ENCODE measurements at regions of chr6 and their contacts with region 1.

Region 1: GRCh38 chr6:56955171-56956045 is 501 bp downstream of the BEND6 start:
- DNase-seq: peak; percentile 62
- H3K4me3 Mint-ChIP-seq: peak overlapping the region; percentile 84
- H3K27ac Mint-ChIP-seq: peak overlapping the region; percentile 70
- H3K4me1 Mint-ChIP-seq: peaks cover 19% of the 10 kb centered on the region
- H3K27me3 Mint-ChIP-seq: peaks cover 57% of the 10 kb centered on the region

Region 2: GRCh38 chr6:56843573-56844349 is 111.6 kb before region 1 on chr6:
- intact Hi-C with region 1: loop called (anchors 5 kb)
- DNase-seq: peak; percentile 57
- H3K4me3 Mint-ChIP-seq: peak overlapping the region; percentile 78
- H3K27ac Mint-ChIP-seq: peak overlapping the region; percentile 32
- H3K4me1 Mint-ChIP-seq: peaks cover 9% of the 10 kb centered on the region
- H3K27me3 Mint-ChIP-seq: peaks cover 52% of the 10 kb centered on the region

Region 3: DNA sequence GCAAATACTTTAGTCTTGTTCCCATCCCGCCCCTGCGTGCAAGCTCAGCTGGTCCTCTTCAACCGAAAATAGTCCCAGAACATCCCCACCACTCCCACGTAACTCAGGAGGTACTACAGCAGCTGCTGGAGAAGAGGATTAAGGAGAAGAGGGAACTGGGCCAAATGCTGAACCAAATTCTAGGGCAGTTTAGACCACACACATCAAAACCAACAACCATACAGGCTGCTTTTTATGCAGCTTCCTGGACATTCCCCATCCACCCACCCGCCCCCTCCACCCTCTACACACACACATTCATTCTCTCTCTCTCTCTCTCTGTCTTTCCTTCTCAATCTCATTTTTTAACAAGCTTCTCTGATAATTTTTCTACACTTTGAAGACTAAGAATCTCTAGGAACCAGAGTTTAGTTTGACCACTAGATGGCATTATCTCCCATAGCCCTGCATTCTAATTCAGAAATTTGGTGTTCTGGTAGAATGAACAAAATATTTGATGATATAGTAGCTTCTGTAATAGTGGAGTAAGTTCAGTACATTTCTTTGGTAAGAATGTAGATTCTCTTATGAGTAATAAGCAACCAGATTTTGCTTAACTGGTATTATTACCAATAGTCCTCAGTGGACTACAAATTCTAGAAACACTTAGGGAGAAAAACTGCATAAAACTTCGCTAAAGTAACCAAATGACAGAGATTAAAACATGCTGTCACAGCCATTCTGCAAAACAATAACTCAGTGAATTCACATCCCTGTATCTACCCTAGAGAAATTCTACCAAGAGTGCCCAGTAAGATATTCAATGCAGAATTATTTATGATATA is 52.6 kb before region 1 on chr6:
- intact Hi-C with region 1: loop called (anchors 2 kb)
- DNase-seq: no peak
- H3K4me3 Mint-ChIP-seq: no peak overlapping the region
- H3K27ac Mint-ChIP-seq: no peak overlapping the region
- H3K4me1 Mint-ChIP-seq: peaks cover 5% of the 10 kb centered on the region
- H3K27me3 Mint-ChIP-seq: peaks cover 15% of the 10 kb centered on the region

Region 4: DNA sequence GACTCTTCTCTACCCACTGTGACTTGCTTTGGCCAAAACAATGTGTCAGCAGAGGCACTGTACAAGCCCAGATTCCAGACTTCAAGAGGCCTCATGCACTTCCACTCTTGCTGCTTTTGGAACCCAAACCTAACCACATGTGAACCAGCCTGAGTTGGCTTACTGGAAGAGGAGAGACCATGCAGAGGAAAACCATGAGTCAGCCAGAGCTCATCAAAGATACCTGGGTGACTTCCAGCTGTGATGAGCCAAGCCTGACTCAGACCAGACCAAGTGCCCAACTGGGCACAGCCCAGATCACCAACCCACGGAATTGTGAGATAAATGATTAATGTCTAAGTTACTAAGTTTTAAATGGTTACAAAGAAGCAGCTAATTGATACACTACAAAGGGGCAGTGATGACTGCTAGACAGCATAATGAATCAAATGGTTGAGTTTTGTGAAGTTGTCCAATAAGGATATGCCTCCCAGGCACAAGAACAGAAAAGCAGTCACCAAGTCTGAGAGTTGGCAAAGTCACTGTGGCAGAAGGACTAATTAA is 16.7 kb before region 1 on chr6:
- intact Hi-C with region 1: no loop called
- DNase-seq: no peak
- H3K4me3 Mint-ChIP-seq: no peak overlapping the region
- H3K27ac Mint-ChIP-seq: no peak overlapping the region
- H3K4me1 Mint-ChIP-seq: no peaks in the 10 kb centered on the region
- H3K27me3 Mint-ChIP-seq: peaks cover 3% of the 10 kb centered on the region

Region 5: DNA sequence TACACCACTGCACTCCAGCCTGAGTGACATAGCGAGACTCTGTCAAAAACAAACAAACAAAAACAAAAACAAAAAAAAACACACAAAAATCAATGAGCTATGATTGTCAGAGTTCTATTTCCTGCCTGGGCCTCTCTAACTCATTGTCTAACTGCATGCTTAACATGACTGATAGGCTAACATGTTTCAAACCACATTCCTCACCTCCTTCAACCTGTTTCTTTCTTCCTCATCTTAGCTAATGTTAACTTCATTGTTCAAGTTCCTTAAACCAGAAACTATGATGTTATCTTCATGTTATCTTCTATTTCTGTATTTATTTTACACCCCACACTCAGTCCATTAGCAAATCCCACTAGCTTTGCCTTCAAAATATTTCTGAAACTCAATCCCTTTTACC is 41.0 kb after region 1 on chr6:
- intact Hi-C with region 1: no loop called
- DNase-seq: no peak
- H3K4me3 Mint-ChIP-seq: no peak overlapping the region
- H3K27ac Mint-ChIP-seq: no peak overlapping the region
- H3K4me1 Mint-ChIP-seq: no peaks in the 10 kb centered on the region
- H3K27me3 Mint-ChIP-seq: peaks cover 13% of the 10 kb centered on the region

Region 6: GRCh38 chr6:57048577-57048976 is 93.2 kb after region 1 on chr6:
- intact Hi-C with region 1: loop called (anchors 2 kb)
- DNase-seq: no peak
- H3K4me3 Mint-ChIP-seq: peak overlapping the region; percentile 84
- H3K27ac Mint-ChIP-seq: no peak overlapping the region
- H3K4me1 Mint-ChIP-seq: peaks cover 35% of the 10 kb centered on the region
- H3K27me3 Mint-ChIP-seq: peaks cover 23% of the 10 kb centered on the region

Region 7: GRCh38 chr6:57221936-57222742 is 266.7 kb after region 1 on chr6 and contains the start of gene RAB23:
- intact Hi-C with region 1: loop called (anchors 1 kb)
- DNase-seq: peak; percentile 85
- H3K4me3 Mint-ChIP-seq: peak within 1 kb of the TSS; percentile 94
- H3K27ac Mint-ChIP-seq: peak within 1 kb of the TSS; percentile 94
- H3K4me1 Mint-ChIP-seq: peaks cover 39% of the 10 kb centered on the region
- H3K27me3 Mint-ChIP-seq: peaks cover 30% of the 10 kb centered on the region
- total RNA-seq, gene RAB23: 3.0 and 3.8 TPM in 2 replicates

Measured in activated T-helper 1 cell treated with anti-CD3 and anti-CD28 coated beads, Interleukin-12 subunit alpha, Interleukin-12 subunit beta, Interleukin-2, Interleukin-4 antibody, amounts not matched to agents 30 ng/mL and 10 ng/mL and 1 ng/mL, durations not matched to agents 14 hours and 24 hours and 36 hours (primary cell).